Left colon (tissue), 2 donors: ENCODE measurements at regions of chr9 and their contacts with region 1.

Region 1: DNA sequence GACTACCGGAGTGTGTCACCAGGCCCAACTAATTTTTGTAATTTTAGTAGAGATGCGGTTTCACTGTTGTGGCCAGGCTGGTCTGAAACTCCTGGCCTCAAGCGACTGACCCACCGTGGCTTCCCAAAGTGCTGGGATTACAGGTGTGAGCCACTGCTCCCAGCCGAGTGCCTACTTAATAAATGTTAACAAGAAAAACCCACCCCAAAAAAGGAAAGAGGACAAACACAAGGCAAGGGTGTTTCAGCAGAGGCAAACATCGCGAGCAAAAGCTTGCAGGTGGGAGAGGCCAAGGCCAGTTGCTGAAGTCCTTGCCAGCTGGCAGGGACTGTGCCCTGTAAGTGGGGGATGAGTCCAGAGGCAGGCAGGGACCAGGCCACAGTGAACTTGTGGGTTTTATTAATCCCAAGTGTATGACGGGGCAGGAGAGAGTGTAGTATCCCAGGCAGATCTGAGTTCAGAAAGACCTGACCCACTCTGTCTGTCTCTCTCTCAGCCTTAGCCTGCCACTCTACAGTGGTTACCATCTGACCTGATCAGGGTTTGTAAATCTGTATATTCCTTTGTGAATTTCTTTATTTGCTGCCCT is 6.4 kb upstream of the FPGS start:
- DNase-seq: peak in 1 of 2 donors; percentile 46
- ATAC-seq: peak; percentile 45

Region 2: GRCh38 chr9:127437497-127438264 is 358.6 kb before region 1 on chr9:
- intact Hi-C with region 1: no loop called
- DNase-seq: no peak
- ATAC-seq: no peak

Region 3: DNA sequence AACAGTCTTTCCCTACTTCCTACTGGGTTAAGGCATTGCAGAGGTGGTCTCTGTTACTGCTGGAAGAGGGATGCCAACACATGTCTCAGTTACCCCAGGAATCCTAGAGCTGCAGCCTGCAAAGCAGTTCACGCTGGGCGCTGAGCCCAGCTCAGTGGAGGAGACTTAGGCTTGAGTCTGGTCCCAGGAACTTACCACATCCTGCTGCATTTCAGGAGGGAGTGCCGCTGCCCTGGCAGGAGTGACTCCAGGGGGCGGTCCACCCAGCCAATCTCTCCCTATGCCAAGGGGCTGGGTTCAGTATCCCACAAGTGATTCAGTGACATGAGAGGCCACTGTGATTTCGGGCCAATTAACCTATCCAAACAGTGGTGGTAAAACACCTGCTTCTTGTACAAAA is 72.9 kb before region 1 on chr9:
- intact Hi-C with region 1: no loop called
- DNase-seq: no peak
- ATAC-seq: peak; percentile 47

Region 4: GRCh38 chr9:127869310-127870152 is 73.2 kb after region 1 on chr9:
- intact Hi-C with region 1: loop called in 1 of 2 experiments (anchors 10 kb)
- DNase-seq: peak; percentile 84 to 89
- ATAC-seq: peak; percentile 85